ENCODE measurements at regions of chr15 and their contacts with region 1.

Region 1: GRCh38 chr15:68277603-68278344 is at the start of gene FEM1B:
- DNase-seq: peak; percentile 81
- H3K27ac ChIP-seq: peak within 1 kb of the TSS; percentile 100
- CTCF ChIP-seq: no peak; the same call in 1 of the 2 replicates

Region 2: DNA sequence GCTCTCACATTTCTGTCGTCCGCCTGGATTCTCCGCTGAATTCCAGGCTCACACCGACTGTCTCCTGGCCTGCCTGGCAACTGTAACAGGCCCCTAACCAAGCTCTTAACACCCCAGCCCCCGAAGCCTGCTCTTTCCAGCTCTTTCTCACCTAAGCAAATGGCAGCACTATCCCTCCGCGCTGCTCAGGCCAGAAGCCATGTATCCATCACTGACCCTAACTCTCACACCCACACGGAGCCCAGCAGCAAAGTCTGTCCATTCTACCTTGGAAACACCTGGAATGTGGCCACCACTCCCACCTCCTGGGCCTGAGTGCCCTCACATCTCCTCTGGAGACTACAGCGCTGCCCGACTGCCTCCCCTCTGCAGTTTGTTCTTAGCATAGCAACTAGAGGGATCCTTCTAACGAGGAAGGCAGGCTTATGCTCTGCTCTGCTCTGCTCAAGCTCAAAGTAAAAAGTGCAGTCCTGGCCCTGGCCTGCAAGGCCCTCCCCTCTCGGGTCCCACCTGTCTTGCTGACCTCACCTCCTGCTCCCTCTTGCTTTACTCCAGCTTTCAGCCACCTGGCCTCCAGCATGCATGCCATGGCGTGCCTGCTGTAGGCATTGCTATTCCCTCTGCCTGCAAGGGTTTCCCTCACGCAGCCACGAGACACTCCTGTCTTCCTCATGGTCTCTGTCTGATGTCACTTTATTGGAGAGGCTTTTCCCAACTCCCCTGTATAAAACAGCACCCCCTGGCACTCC is 27.0 kb after region 1 on chr15:
- CTCF ChIA-PET with region 1: interaction called, 13 read pairs
- POLR2A ChIA-PET with region 1: no interaction called
- DNase-seq: peak; percentile 38
- H3K27ac ChIP-seq: peak overlapping the region; percentile 67
- CTCF ChIP-seq: no peak